HepG2 (cell line): ENCODE measurements at regions of chr6 and their contacts with region 1.

Region 1: DNA sequence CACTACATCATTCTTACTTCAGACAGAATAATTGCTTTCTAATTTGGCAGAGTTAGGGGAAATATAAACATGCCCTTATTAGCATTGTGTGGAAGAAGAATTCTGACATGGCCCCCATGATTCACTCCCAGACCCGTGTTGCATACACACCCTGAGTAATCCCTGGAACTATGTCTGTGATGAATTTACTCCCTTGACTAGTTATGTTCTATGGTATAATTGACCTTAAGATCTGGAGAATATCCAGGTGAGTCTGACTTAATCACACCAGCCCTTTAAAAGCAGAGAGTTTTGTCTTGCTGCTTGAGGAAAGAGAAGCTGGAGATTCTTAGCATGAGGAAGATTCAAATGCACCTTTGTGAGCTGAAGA is 262.9 kb downstream of the SOX4 start:
- DNase-seq: no peak
- ATAC-seq: no peak
- H3K4me3 ChIP-seq: no peak overlapping the region
- H3K27ac ChIP-seq: no peak overlapping the region
- H3K4me1 ChIP-seq: no peaks in the 10 kb centered on the region
- H3K27me3 ChIP-seq: no peaks in the 10 kb centered on the region
- CTCF ChIP-seq: no peak
- EP300 ChIP-seq: no peak
- POLR2A ChIP-seq: no peak
- RAD21 ChIP-seq: no peak

Region 2: GRCh38 chr6:20135677-20136268 is 1720.7 kb before region 1 on chr6:
- CTCF ChIA-PET with region 1: no interaction called
- POLR2A ChIA-PET with region 1: no interaction called
- in situ Hi-C with region 1: no loop called
- intact Hi-C with region 1: loop called (anchors 5 kb)
- DNase-seq: no peak
- ATAC-seq: no peak
- H3K4me3 ChIP-seq: no peak overlapping the region
- H3K27ac ChIP-seq: no peak overlapping the region
- H3K4me1 ChIP-seq: peaks cover 5% of the 10 kb centered on the region
- H3K27me3 ChIP-seq: peaks cover 0 to 3% of the 10 kb centered on the region in 2 experiments; a peak in 1 of 5 replicates
- CTCF ChIP-seq: no peak
- EP300 ChIP-seq: no peak
- POLR2A ChIP-seq: no peak
- RAD21 ChIP-seq: no peak

Region 3: GRCh38 chr6:21999012-21999528 is 142.6 kb after region 1 on chr6:
- CTCF ChIA-PET with region 1: no interaction called
- POLR2A ChIA-PET with region 1: no interaction called
- in situ Hi-C with region 1: no loop called
- intact Hi-C with region 1: no loop called
- DNase-seq: no peak
- ATAC-seq: no peak
- H3K4me3 ChIP-seq: no peak overlapping the region
- H3K27ac ChIP-seq: no peak overlapping the region
- H3K4me1 ChIP-seq: no peaks in the 10 kb centered on the region
- H3K27me3 ChIP-seq: no peaks in the 10 kb centered on the region
- CTCF ChIP-seq: no peak
- EP300 ChIP-seq: no peak
- POLR2A ChIP-seq: no peak
- RAD21 ChIP-seq: no peak